Caco-2 (cell line): ENCODE measurements at regions of chr11 and their contacts with region 1.

Region 1: DNA sequence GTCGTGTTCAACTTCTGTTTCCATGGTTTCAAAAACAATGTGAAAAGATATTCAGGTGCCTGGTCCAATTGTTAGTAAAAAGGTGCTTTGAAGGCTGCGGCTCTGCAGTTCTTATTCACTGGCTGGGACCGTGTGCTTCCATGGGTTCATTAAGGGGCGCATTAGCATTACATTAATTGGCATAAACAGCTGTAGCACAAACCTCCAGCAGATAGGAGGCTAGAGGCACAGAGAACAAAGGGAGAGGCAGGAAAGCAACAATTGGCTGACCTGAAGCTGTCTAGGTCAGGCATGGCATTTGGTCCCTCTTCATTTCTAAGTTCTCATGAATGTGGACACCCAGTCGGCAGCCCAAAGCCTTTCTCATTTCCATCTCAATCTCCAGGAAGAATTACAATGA is 16.6 kb downstream of the PAK1 start:
- DNase-seq: no peak
- H3K4me3 ChIP-seq: no peak overlapping the region
- H3K4me3 Mint-ChIP-seq: no peak overlapping the region
- H3K27ac Mint-ChIP-seq: no peak overlapping the region
- H3K4me1 ChIP-seq: peaks cover 42% of the 10 kb centered on the region
- H3K4me1 Mint-ChIP-seq: peaks cover 49% of the 10 kb centered on the region
- H3K27me3 ChIP-seq: no peaks in the 10 kb centered on the region
- H3K27me3 Mint-ChIP-seq: no peaks in the 10 kb centered on the region
- CTCF ChIP-seq: no peak

Region 2: GRCh38 chr11:77205467-77206263 is 251.7 kb before region 1 on chr11:
- CTCF ChIA-PET with region 1: no interaction called
- POLR2A ChIA-PET with region 1: no interaction called
- intact Hi-C with region 1: no loop called
- DNase-seq: peak in 1 of 2 experiments; percentile 38
- H3K4me3 ChIP-seq: no peak overlapping the region
- H3K4me3 Mint-ChIP-seq: no peak overlapping the region
- H3K27ac Mint-ChIP-seq: no peak overlapping the region
- H3K4me1 ChIP-seq: no peaks in the 10 kb centered on the region
- H3K4me1 Mint-ChIP-seq: no peaks in the 10 kb centered on the region
- H3K27me3 ChIP-seq: no peaks in the 10 kb centered on the region
- H3K27me3 Mint-ChIP-seq: no peaks in the 10 kb centered on the region
- CTCF ChIP-seq: no peak

Region 3: GRCh38 chr11:77479746-77480352 is 22.5 kb after region 1 on chr11:
- CTCF ChIA-PET with region 1: interaction called, 10 read pairs
- POLR2A ChIA-PET with region 1: no interaction called
- intact Hi-C with region 1: no loop called
- DNase-seq: no peak
- H3K4me3 ChIP-seq: no peak overlapping the region
- H3K4me3 Mint-ChIP-seq: no peak overlapping the region
- H3K27ac Mint-ChIP-seq: no peak overlapping the region
- H3K4me1 ChIP-seq: peaks cover 4% of the 10 kb centered on the region; the same call in 1 of the 2 replicates
- H3K4me1 Mint-ChIP-seq: peaks cover 6% of the 10 kb centered on the region
- H3K27me3 ChIP-seq: no peaks in the 10 kb centered on the region
- H3K27me3 Mint-ChIP-seq: no peaks in the 10 kb centered on the region
- CTCF ChIP-seq: no peak